Calu3 (cell line): ENCODE measurements at regions of chr1 and their contacts with region 1.

Region 1: DNA sequence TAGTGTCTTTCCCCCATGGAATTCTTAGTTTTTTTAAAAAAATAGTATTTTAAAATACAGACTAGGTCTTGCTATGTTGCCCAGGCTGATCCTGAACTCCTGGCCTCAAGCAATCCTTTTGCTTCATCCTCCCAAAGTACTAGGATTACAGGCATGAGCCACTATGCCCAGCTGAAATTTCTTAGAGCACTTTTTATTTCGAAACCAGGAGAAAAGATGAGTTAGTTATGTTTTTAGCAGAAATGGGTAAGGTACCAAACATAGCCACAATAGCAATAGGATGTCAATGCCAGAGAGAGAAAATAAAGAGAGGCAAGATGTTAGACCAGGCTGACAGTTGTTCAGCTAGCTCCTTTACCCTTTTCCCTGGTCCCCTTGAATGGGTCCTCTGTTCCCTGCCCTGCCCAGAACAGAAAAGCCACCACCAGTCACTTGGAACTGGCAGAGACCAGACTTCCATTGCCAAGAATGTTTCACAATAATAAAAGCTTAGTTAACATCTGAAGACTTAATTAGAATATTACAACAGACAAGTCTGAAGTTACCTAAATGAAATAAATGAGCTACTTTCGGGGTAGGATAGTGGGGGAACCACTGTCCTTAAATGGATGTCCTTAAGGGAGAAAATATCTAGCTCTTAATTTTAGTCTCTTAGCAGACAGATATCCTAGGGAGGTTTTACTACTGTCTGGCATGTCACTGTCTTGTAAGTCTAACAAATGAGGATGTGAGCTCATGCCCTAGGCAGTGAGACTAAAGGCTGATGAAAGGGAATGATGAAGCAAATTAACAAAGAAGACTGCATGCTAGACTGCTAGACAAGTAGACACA is 54.3 kb downstream of the ABL2 start:
- DNase-seq: peak; percentile 48
- H3K4me3 Mint-ChIP-seq: no peak overlapping the region
- H3K27ac Mint-ChIP-seq: peak overlapping the region; percentile 77
- H3K4me1 Mint-ChIP-seq: peaks cover 23% of the 10 kb centered on the region
- H3K27me3 Mint-ChIP-seq: no peaks in the 10 kb centered on the region
- CTCF ChIP-seq: no peak

Region 2: DNA sequence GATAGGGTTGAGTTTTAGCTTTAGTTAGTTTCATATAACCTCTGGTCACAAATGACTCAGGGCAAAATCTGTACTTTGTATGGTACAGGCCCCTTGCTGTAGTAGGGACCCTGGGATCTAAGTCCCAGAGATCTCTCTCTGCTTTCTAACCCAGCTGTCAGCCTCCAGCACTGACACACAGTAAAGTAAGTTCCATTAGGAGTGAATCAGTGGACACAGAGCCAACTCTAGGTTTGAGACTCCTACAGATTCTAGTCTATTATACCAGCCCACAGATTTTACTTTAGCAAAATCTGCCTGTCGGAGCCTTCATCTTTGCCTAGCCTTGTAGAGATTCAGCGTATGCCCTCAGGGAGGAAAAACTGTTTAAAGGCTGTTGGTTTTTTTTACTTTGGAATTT is 356.8 kb before region 1 on chr1:
- CTCF ChIA-PET with region 1: no interaction called
- intact Hi-C with region 1: no loop called
- DNase-seq: no peak
- H3K4me3 Mint-ChIP-seq: no peak overlapping the region
- H3K27ac Mint-ChIP-seq: no peak overlapping the region
- H3K4me1 Mint-ChIP-seq: peaks cover 20% of the 10 kb centered on the region
- H3K27me3 Mint-ChIP-seq: no peaks in the 10 kb centered on the region
- CTCF ChIP-seq: no peak

Region 3: GRCh38 chr1:179129702-179130473 is 45.3 kb before region 1 on chr1:
- CTCF ChIA-PET with region 1: interaction called, 4 read pairs
- intact Hi-C with region 1: loop called (anchors 5 kb)
- DNase-seq: no peak
- H3K4me3 Mint-ChIP-seq: peak overlapping the region; percentile 51
- H3K27ac Mint-ChIP-seq: peak overlapping the region; percentile 91
- H3K4me1 Mint-ChIP-seq: peaks cover 89% of the 10 kb centered on the region
- H3K27me3 Mint-ChIP-seq: no peaks in the 10 kb centered on the region
- CTCF ChIP-seq: no peak

Region 4: DNA sequence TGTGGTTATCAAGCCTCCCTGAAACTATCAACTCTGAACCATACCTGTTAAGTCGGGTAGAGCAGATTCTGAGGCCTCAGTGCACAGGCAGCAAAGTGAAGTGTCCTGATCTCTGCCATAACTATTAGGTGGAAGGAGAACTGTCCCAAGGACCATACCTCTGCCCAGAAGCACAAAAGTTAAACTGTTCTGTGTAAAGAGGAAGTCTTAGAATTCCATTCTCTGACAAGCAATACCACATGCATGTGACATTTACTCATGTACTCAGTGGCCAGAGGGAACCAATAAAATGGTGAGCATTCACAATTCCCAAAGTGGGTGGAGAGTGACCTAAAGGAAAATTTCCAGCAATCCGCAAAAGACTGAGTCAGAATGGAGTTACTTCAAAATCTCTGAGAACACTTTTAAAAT is 32.3 kb before region 1 on chr1:
- CTCF ChIA-PET with region 1: interaction called, 3 read pairs
- intact Hi-C with region 1: loop called (anchors 5 kb)
- DNase-seq: peak; percentile 51
- H3K4me3 Mint-ChIP-seq: peak overlapping the region; percentile 61
- H3K27ac Mint-ChIP-seq: peak overlapping the region; percentile 65
- H3K4me1 Mint-ChIP-seq: peaks cover 35% of the 10 kb centered on the region
- H3K27me3 Mint-ChIP-seq: no peaks in the 10 kb centered on the region
- CTCF ChIP-seq: no peak

Region 5: GRCh38 chr1:179506199-179506598 is 331.0 kb after region 1 on chr1:
- CTCF ChIA-PET with region 1: no interaction called
- intact Hi-C with region 1: no loop called
- DNase-seq: no peak
- H3K4me3 Mint-ChIP-seq: no peak overlapping the region
- H3K27ac Mint-ChIP-seq: no peak overlapping the region
- H3K4me1 Mint-ChIP-seq: no peaks in the 10 kb centered on the region
- H3K27me3 Mint-ChIP-seq: peaks cover 19% of the 10 kb centered on the region
- CTCF ChIP-seq: no peak